Endothelial cell of umbilical vein (primary cell): ENCODE measurements at regions of chr10 and their contacts with region 1.

Region 1: DNA sequence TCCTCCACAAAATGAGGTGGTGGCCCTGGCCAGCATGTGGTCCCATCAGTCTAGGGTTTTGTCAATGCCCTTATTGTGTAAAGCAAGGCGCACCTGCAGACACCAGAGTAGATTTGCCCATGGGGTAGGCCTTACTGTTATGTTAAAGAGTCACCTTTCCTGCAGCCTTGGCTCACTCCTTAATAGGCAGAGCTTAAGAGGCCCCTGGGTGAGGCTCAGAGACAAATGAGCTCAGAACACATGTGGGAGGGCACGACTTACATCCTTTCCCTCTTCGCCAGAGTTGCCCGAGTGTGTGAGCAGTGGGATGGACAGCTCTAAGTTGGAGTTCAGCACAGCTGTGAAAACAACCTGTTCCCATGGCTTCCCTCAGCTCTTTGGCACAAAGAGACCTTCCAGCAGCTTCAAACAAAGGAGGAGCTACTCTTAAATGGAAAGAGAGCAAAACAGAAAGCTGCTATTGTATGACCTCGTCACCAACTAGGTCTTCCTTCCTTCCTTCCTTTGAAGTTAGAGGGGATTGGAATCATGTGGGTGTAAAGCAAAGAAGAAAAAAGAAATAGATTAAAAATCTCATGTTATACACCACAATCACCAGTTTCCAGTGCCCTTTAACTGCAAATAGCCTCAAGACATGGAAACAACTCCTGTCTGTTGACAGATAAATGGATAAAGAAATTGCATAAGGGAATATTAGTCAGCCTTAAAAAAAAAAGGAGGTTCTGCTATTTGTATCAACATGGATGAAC is 11.8 kb upstream of the XPNPEP1 start:
- DNase-seq: peak; percentile 99
- H3K4me3 ChIP-seq: peak overlapping the region in 1 of 3 experiments; percentile 26
- H3K27ac ChIP-seq: peak overlapping the region; percentile 52
- H3K4me1 ChIP-seq: peaks cover 24% of the 10 kb centered on the region
- H3K27me3 ChIP-seq: no peaks in the 10 kb centered on the region
- CTCF ChIP-seq: no peak
- POLR2A ChIP-seq: no peak

Region 2: GRCh38 chr10:108673741-108674140 is 1261.4 kb before region 1 on chr10:
- CTCF ChIA-PET with region 1: no interaction called
- POLR2A ChIA-PET with region 1: no interaction called
- dilution Hi-C with region 1: no loop called
- intact Hi-C with region 1: no loop called
- DNase-seq: no peak
- H3K4me3 ChIP-seq: no peak overlapping the region
- H3K27ac ChIP-seq: no peak overlapping the region
- H3K4me1 ChIP-seq: no peaks in the 10 kb centered on the region
- H3K27me3 ChIP-seq: no peaks in the 10 kb centered on the region
- CTCF ChIP-seq: no peak
- POLR2A ChIP-seq: no peak

Region 3: DNA sequence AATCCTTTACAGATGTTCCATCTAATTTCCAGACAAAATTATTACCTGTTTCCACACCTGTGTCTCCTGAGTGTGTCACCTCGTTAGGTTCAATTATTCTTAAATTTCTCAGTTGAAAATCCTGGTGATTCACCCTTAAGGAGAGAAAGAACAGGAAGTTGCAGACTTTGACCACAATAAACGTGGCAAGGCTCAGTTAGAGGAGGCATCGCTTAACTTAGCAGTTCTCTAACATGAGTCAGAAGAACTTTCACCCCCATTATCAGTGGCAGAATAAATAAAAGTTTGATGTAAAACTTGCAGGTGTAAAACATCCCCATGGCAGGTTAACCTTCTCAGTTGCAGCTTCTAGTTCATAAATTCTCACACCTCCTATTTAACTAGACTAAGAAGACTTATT is 20.2 kb before region 1 on chr10:
- CTCF ChIA-PET with region 1: no interaction called
- POLR2A ChIA-PET with region 1: no interaction called
- dilution Hi-C with region 1: no loop called
- intact Hi-C with region 1: loop called (anchors 2 kb)
- DNase-seq: peak; percentile 81
- H3K4me3 ChIP-seq: no peak overlapping the region
- H3K27ac ChIP-seq: peak overlapping the region; percentile 32
- H3K4me1 ChIP-seq: peaks cover 12% of the 10 kb centered on the region
- H3K27me3 ChIP-seq: no peaks in the 10 kb centered on the region
- CTCF ChIP-seq: no peak
- POLR2A ChIP-seq: no peak

Region 4: GRCh38 chr10:109922976-109923921 is 11.9 kb before region 1 on chr10 and contains the start of gene XPNPEP1:
- CTCF ChIA-PET with region 1: interaction called, 3 read pairs
- POLR2A ChIA-PET with region 1: interaction called, 5 read pairs
- dilution Hi-C with region 1: no loop called
- intact Hi-C with region 1: loop called (anchors 1 kb)
- DNase-seq: peak; percentile 86
- H3K4me3 ChIP-seq: peak within 1 kb of the TSS; percentile 58 to 91 (median 80)
- H3K27ac ChIP-seq: peak within 1 kb of the TSS; percentile 92
- H3K4me1 ChIP-seq: peaks cover 12% of the 10 kb centered on the region
- H3K27me3 ChIP-seq: no peaks in the 10 kb centered on the region
- CTCF ChIP-seq: peak in 1 of 2 donors; percentile 4
- POLR2A ChIP-seq: peak; percentile 91
- total RNA-seq, gene XPNPEP1: 81.1 and 87.3 TPM in 2 replicates

Region 5: DNA sequence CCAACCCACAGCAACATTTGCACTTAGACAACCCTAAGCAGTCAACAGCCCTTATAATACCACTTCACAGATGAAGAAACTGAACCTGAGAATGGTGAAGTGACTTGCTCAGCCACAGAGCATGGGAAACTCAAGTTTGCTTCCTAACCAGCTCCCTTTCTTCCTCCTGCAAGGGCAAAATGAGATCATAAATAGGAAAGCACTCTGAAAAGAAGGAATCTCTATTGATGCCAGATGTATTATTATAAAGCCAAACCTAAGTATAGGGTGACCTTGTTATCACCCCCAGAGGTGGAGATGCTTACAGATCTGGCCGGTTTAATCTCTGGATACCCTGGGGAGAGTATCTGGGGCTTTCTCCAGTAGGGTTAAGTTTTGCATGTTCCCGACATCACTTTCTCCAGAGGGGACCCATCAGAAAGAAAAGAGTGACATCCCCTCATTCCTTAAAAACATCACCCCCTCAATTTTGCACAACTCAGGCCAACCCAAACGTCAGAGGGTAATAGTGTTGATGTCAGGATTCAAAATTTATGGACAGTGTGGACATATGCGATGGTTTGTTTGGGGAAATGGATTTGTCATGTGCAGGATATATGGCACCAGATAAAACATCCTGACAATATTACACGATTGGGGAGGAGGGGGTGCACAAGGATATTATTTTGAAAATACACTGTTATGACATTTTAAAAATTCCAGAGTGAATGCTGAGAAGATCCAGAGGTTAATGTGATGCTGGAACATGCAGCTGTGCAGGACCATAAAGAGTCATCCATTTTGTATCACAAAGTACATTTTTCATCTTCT is 12.2 kb after region 1 on chr10:
- CTCF ChIA-PET with region 1: interaction called, 10 read pairs
- POLR2A ChIA-PET with region 1: no interaction called
- dilution Hi-C with region 1: no loop called
- intact Hi-C with region 1: no loop called
- DNase-seq: peak; percentile 31
- H3K4me3 ChIP-seq: no peak overlapping the region
- H3K27ac ChIP-seq: no peak overlapping the region
- H3K4me1 ChIP-seq: no peaks in the 10 kb centered on the region
- H3K27me3 ChIP-seq: peaks cover 0 to 2% of the 10 kb centered on the region in 2 experiments
- CTCF ChIP-seq: no peak
- POLR2A ChIP-seq: no peak

Region 6: GRCh38 chr10:109978481-109978880 is 43.3 kb after region 1 on chr10:
- CTCF ChIA-PET with region 1: interaction called, 11 read pairs
- POLR2A ChIA-PET with region 1: no interaction called
- dilution Hi-C with region 1: no loop called
- intact Hi-C with region 1: no loop called
- DNase-seq: peak; percentile 66
- H3K4me3 ChIP-seq: no peak overlapping the region
- H3K27ac ChIP-seq: no peak overlapping the region
- H3K4me1 ChIP-seq: no peaks in the 10 kb centered on the region
- H3K27me3 ChIP-seq: no peaks in the 10 kb centered on the region
- CTCF ChIP-seq: peak; percentile 71 to 77
- POLR2A ChIP-seq: no peak

Region 7: DNA sequence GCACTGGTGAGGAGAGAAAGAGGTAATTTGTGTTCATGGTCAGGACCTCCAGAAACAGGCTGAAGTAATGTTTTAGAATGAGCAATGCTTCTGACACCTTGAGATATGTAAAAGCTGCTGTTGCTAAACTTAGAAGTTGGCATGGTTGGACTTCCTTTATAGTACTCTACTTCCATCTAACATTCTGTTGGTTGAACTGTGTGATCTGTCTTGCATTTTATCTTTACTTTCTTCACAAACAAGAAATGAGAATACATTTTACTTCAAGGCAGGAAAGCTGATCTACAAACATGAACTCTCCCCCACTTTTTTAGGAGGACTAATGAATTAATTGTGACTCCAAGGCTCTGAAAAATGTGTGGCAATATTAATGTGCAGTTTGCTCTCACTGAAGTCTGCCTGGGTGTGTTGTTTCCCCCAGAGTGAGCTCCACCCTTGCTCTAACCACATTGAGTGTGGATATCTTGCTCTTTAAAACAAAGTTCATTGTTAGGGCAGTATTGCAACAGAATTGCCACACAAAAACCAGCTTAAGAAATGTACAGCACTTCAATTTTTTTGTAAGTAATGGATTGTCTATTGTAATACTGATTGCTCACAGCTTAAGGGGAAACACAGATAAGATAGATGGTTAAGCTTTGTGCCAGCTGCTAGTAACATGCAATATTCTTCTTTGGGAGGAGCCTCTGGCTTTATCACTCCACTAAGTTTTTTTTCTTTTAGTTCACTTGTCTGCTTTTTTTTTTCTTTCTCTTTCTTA is 141.6 kb after region 1 on chr10:
- CTCF ChIA-PET with region 1: interaction called, 6 read pairs
- POLR2A ChIA-PET with region 1: interaction called, 6 read pairs
- dilution Hi-C with region 1: no loop called
- intact Hi-C with region 1: loop called (anchors 1 kb)
- DNase-seq: peak; percentile 91
- H3K4me3 ChIP-seq: peak overlapping the region in 1 of 3 experiments; percentile 23
- H3K27ac ChIP-seq: peak overlapping the region; percentile 83
- H3K4me1 ChIP-seq: peaks cover 53% of the 10 kb centered on the region
- H3K27me3 ChIP-seq: no peaks in the 10 kb centered on the region
- CTCF ChIP-seq: no peak
- POLR2A ChIP-seq: no peak

Region 8: DNA sequence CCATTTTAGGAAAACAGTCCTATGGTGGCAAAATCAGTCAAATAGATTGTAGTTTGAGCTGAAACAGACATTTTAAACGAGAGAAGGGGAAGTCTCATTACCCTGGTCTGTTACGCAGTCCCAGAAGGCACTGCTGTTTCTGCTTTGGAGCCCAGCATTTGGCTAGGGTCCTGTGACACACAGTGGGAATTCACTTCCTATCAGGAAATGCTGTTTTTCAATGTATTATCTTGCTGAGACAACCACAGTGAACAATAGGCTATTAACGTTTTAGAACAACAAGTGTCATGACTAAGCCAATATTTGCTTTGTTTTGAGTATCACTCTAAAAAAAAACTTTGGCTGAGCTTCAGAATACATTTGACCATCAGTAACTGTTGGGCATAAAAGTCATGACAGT is 146.8 kb after region 1 on chr10:
- CTCF ChIA-PET with region 1: interaction called, 6 read pairs
- POLR2A ChIA-PET with region 1: interaction called, 6 read pairs
- dilution Hi-C with region 1: no loop called
- intact Hi-C with region 1: loop called (anchors 1 kb)
- DNase-seq: peak; percentile 97
- H3K4me3 ChIP-seq: no peak overlapping the region
- H3K27ac ChIP-seq: peak overlapping the region; percentile 90
- H3K4me1 ChIP-seq: peaks cover 41% of the 10 kb centered on the region
- H3K27me3 ChIP-seq: no peaks in the 10 kb centered on the region
- CTCF ChIP-seq: no peak
- POLR2A ChIP-seq: peak; percentile 70

Region 9: GRCh38 chr10:110252151-110252550 is 317.0 kb after region 1 on chr10:
- CTCF ChIA-PET with region 1: no interaction called
- POLR2A ChIA-PET with region 1: no interaction called
- dilution Hi-C with region 1: no loop called
- intact Hi-C with region 1: no loop called
- DNase-seq: no peak
- H3K4me3 ChIP-seq: no peak overlapping the region
- H3K27ac ChIP-seq: no peak overlapping the region
- H3K4me1 ChIP-seq: no peaks in the 10 kb centered on the region
- H3K27me3 ChIP-seq: no peaks in the 10 kb centered on the region
- CTCF ChIP-seq: no peak
- POLR2A ChIP-seq: no peak

Region 10: DNA sequence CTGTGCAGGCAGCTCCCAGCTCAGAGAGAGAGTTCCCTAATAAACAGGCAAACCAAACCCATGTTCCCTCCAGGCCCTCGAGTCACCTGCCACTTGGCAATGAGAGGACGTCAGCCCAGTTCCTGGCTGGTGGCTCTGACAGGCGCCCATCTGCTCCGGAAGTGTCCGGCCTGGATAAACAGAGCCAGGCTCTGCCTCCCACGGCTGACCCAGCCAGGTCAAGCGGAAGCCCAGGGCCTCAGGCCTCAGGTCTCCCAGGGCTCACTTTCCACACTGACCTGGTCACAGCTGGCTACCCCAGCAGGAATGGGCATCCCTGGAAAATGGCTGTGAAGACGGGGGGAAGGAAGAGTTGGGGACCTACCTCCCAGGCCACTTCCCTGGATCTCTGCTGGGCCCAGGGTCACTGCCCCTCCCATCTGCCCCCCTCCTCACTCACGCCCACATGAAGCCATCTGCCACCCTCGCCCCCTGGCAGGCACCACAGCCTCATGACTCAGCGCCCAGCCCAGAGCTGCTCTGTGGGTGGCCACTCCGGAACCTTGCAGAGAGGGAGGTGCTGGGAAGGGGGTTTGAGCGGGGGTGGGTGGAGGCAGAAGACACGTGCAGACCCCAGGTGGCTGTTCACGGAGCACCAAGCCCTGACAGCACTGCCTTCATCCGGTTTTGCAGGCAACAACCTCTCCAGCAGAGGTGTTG is 525.1 kb after region 1 on chr10:
- CTCF ChIA-PET with region 1: no interaction called
- POLR2A ChIA-PET with region 1: no interaction called
- dilution Hi-C with region 1: no loop called
- intact Hi-C with region 1: no loop called
- DNase-seq: peak; percentile 55
- H3K4me3 ChIP-seq: no peak overlapping the region
- H3K27ac ChIP-seq: peak overlapping the region; percentile 66
- H3K4me1 ChIP-seq: peaks cover 29% of the 10 kb centered on the region
- H3K27me3 ChIP-seq: no peaks in the 10 kb centered on the region
- CTCF ChIP-seq: no peak
- POLR2A ChIP-seq: no peak